Caco-2 (cell line): ENCODE measurements at regions of chr16 and their contacts with region 1.

Region 1: GRCh38 chr16:71808593-71809459 is at the start of gene AP1G1:
- DNase-seq: peak; percentile 97 to 99
- H3K4me3 ChIP-seq: peak within 1 kb of the TSS; percentile 83
- H3K4me3 Mint-ChIP-seq: peak within 1 kb of the TSS; percentile 93
- H3K27ac Mint-ChIP-seq: peak within 1 kb of the TSS; percentile 97
- H3K4me1 ChIP-seq: 0 out of 2 replicates have a peak, but pooled peaks cover 16% of the 10 kb centered on the region
- H3K4me1 Mint-ChIP-seq: no peaks in the 10 kb centered on the region
- H3K27me3 ChIP-seq: no peaks in the 10 kb centered on the region
- H3K27me3 Mint-ChIP-seq: no peaks in the 10 kb centered on the region
- CTCF ChIP-seq: no peak
- total RNA-seq, gene AP1G1: 135 and 139 TPM in 2 replicates

Region 2: GRCh38 chr16:71845639-71846430 is 37.0 kb after region 1 on chr16 and contains the start of gene ATXN1L:
- CTCF ChIA-PET with region 1: no interaction called
- POLR2A ChIA-PET with region 1: no interaction called
- intact Hi-C with region 1: loop called (anchors 1 kb)
- DNase-seq: peak; percentile 95 to 98
- H3K4me3 ChIP-seq: peak within 1 kb of the TSS; percentile 93
- H3K4me3 Mint-ChIP-seq: peak within 1 kb of the TSS; percentile 91
- H3K27ac Mint-ChIP-seq: peak within 1 kb of the TSS; percentile 95
- H3K4me1 ChIP-seq: peaks cover 8% of the 10 kb centered on the region; the same call in 1 of the 2 replicates
- H3K4me1 Mint-ChIP-seq: peaks cover 9% of the 10 kb centered on the region
- H3K27me3 ChIP-seq: no peaks in the 10 kb centered on the region
- H3K27me3 Mint-ChIP-seq: no peaks in the 10 kb centered on the region
- CTCF ChIP-seq: no peak
- total RNA-seq, gene ATXN1L: 40.6 and 44.8 TPM in 2 replicates

Region 3: DNA sequence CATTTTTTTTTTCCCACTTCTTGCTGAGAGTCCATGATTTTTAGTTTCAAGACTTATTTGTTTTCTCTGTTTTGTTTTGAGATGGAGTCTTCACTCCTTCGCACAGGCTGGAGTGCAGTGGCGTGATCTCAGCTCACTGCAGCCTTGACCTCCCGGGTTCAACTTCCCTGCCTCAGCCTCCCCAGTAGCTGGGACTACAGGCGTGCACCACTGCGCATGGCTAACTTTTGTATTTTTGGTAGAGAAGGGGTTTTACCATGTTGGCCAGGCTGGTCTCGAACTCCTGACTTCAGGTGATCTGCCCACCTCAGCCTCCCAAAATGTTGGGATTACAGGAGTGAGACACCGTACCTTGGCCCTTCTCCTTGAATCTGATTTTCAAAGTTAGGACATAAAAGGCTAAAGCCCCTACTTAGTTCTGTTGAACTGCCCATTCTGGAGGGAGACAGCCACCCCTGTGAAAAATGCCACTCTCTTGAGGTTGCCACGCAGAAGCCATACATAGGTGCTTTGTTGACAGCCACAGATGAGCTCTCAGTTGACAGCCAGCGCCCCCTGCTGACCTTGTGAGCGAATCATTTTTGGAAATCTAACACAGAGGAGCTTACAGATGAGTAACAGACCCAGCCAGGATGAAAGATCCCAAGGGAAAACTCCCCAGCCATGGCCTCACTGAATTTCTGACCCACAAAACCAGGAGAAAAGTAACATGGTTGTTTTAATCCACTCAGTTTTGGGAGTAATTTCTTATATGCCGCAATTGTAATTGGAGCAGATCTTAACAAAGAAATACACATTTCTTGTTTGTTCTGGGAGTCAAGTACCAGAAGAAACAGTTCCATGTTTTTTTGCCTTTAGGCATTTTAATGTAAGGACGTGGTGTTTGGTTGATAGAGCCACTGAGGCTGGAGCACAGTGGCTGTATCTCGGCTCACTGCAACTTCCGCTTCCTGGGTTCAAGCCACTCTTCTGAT is 152.5 kb after region 1 on chr16:
- CTCF ChIA-PET with region 1: interaction called, 4 read pairs
- POLR2A ChIA-PET with region 1: interaction called, 3 read pairs
- intact Hi-C with region 1: loop called (anchors 10 kb)
- DNase-seq: peak; percentile 85 to 87
- H3K4me3 ChIP-seq: no peak overlapping the region
- H3K4me3 Mint-ChIP-seq: no peak overlapping the region
- H3K27ac Mint-ChIP-seq: no peak overlapping the region
- H3K4me1 ChIP-seq: no peaks in the 10 kb centered on the region
- H3K4me1 Mint-ChIP-seq: peaks cover 9% of the 10 kb centered on the region
- H3K27me3 ChIP-seq: no peaks in the 10 kb centered on the region
- H3K27me3 Mint-ChIP-seq: peaks cover 6% of the 10 kb centered on the region
- CTCF ChIP-seq: peak; percentile 92 to 94